Endothelial cell of umbilical vein (primary cell): ENCODE measurements at regions of chr3 and their contacts with region 1.

Region 1: DNA sequence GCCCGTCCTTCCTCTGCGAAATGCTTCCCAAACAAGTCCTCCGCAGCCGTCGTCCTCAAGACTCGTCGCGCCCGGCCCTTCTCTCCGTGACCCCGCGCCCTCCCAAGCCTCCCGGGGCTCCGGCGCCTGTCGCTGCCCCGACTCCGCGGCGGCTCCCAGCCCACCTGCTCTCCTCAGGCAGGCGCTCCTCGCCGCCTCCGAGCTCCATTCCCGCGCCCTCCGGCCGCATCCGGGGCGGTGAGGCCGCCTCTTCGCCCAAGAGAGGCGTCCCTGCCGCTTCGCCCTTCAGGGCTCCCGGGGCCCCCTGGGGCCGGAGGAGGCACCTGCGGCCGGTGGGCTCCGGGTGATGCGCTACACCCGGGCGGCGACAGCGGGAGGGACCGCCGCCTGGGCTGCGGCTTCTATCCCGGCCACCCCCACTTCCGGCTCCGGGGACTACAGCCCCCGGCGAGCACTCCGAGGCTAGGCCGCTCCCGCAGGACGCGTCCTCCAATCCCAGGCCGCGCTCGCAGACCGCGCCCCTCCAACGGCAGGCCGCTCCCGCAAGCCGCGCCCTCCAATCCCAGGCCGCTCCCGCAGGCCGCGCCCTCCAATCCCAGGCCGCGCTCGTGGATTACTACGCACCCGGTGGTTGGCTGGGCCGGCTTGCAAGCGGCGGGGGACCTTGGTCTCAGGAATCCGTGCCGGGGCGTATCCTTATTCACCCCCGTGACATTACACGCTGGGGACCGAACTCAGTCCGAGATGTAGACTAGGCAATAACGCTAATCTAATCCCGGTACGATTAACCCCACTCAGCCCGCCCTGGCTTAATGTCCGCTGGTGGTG is at the start of gene RUBCN:
- DNase-seq: peak; percentile 97
- H3K4me3 ChIP-seq: peak within 1 kb of the TSS; percentile 35 to 82 (median 75)
- H3K27ac ChIP-seq: no peak within 1 kb of the TSS
- H3K4me1 ChIP-seq: peaks cover 7% of the 10 kb centered on the region
- H3K27me3 ChIP-seq: no peaks in the 10 kb centered on the region
- CTCF ChIP-seq: no peak
- POLR2A ChIP-seq: peak; percentile 78
- total RNA-seq, gene RUBCN: 22.9 and 25.8 TPM in 2 replicates

Region 2: GRCh38 chr3:197711973-197712707 is 24.6 kb before region 1 on chr3:
- CTCF ChIA-PET with region 1: interaction called, 3 read pairs
- POLR2A ChIA-PET with region 1: no interaction called
- dilution Hi-C with region 1: no loop called
- intact Hi-C with region 1: loop called (anchors 1 kb)
- DNase-seq: peak; percentile 98
- H3K4me3 ChIP-seq: peak overlapping the region in 1 of 3 experiments; percentile 70
- H3K27ac ChIP-seq: peak overlapping the region; percentile 71
- H3K4me1 ChIP-seq: peaks cover 26% of the 10 kb centered on the region
- H3K27me3 ChIP-seq: no peaks in the 10 kb centered on the region
- CTCF ChIP-seq: no peak
- POLR2A ChIP-seq: peak; percentile 46